Activated CD8-positive, alpha-beta T cell treated with anti-CD3 and anti-CD28 coated beads for 36 hours (primary cell): ENCODE measurements at regions of chr13 and their contacts with region 1.

Region 1: GRCh38 chr13:97359181-97360057 is 74.5 kb upstream of the RAP2A start:
- DNase-seq: peak; percentile 63
- ATAC-seq: peak; percentile 97
- H3K4me3 Mint-ChIP-seq: no peak overlapping the region
- H3K27ac Mint-ChIP-seq: no peak overlapping the region
- H3K4me1 Mint-ChIP-seq: no peaks in the 10 kb centered on the region
- H3K27me3 Mint-ChIP-seq: no peaks in the 10 kb centered on the region
- CTCF ChIP-seq: peak; percentile 72

Region 2: GRCh38 chr13:97116754-97117153 is 242.7 kb before region 1 on chr13:
- CTCF ChIA-PET with region 1: interaction called, 245 read pairs
- POLR2A ChIA-PET with region 1: no interaction called
- intact Hi-C with region 1: no loop called
- DNase-seq: peak; percentile 33
- ATAC-seq: peak; percentile 54
- H3K4me3 Mint-ChIP-seq: no peak overlapping the region
- H3K27ac Mint-ChIP-seq: no peak overlapping the region
- H3K4me1 Mint-ChIP-seq: peaks cover 6% of the 10 kb centered on the region
- H3K27me3 Mint-ChIP-seq: peaks cover 32% of the 10 kb centered on the region
- CTCF ChIP-seq: no peak

Region 3: DNA sequence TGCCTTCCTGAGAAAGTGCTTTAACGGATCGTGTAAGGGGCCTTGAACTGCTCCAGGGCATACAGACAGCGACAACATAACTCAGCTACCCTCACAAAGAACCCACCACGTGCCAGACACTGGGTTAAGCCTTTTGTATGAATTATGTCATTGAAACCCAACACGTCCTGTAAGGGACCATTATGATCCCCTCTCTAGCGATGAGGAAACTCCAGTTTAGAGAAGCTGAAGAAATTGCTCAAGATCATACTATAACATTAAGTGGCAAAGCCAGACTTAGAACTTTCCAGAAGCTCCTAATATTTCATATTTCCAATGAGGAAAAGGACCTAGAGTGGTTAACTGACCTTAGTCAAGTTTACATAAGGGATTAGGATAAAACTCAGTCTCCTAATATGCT is 17.6 kb after region 1 on chr13:
- CTCF ChIA-PET with region 1: interaction called, 10 read pairs
- POLR2A ChIA-PET with region 1: no interaction called
- intact Hi-C with region 1: no loop called
- DNase-seq: no peak
- ATAC-seq: no peak
- H3K4me3 Mint-ChIP-seq: no peak overlapping the region
- H3K27ac Mint-ChIP-seq: no peak overlapping the region
- H3K4me1 Mint-ChIP-seq: no peaks in the 10 kb centered on the region
- H3K27me3 Mint-ChIP-seq: no peaks in the 10 kb centered on the region
- CTCF ChIP-seq: no peak